ENCODE measurements at regions of chr4 and their contacts with region 1.

Region 1: DNA sequence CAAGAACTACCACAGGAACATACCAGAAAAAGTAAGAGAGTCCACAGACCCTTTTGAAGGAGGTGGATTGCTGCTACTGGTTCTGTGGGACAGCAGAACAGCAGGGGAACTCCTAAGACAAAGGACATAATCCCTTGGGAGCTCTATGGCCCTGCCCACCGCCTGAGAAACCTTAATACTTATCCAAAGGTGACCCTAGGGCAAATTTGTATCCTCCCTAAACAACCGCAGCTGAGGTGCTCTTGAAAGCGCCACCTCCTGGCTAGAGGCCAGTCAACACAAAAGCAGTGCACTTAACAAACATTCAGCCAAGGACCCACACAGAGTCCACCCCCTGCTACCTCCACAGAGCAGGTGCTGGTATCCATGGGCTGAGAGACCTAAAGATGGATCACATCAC is 136.8 kb downstream of the ADAM29 start:
- DNase-seq: no peak
- H3K4me3 ChIP-seq: no peak overlapping the region
- H3K4me3 Mint-ChIP-seq: no peak overlapping the region
- H3K27ac ChIP-seq: no peak overlapping the region
- H3K27ac Mint-ChIP-seq: no peak overlapping the region
- H3K4me1 ChIP-seq: no peaks in the 10 kb centered on the region
- H3K4me1 Mint-ChIP-seq: no peaks in the 10 kb centered on the region
- H3K27me3 ChIP-seq: no peaks in the 10 kb centered on the region
- H3K27me3 Mint-ChIP-seq: no peaks in the 10 kb centered on the region
- CTCF ChIP-seq: no peak

Region 2: GRCh38 chr4:174999407-174999806 is 55.6 kb before region 1 on chr4:
- intact Hi-C with region 1: loop called in 1 of 2 experiments (anchors 10 kb)
- DNase-seq: no peak
- H3K4me3 ChIP-seq: no peak overlapping the region
- H3K4me3 Mint-ChIP-seq: no peak overlapping the region
- H3K27ac ChIP-seq: no peak overlapping the region
- H3K27ac Mint-ChIP-seq: no peak overlapping the region
- H3K4me1 ChIP-seq: no peaks in the 10 kb centered on the region
- H3K4me1 Mint-ChIP-seq: peaks cover 1% of the 10 kb centered on the region
- H3K27me3 ChIP-seq: no peaks in the 10 kb centered on the region
- H3K27me3 Mint-ChIP-seq: no peaks in the 10 kb centered on the region
- CTCF ChIP-seq: no peak